HEK293 (cell line): ENCODE measurements at regions of chr6 and their contacts with region 1.

Region 1: DNA sequence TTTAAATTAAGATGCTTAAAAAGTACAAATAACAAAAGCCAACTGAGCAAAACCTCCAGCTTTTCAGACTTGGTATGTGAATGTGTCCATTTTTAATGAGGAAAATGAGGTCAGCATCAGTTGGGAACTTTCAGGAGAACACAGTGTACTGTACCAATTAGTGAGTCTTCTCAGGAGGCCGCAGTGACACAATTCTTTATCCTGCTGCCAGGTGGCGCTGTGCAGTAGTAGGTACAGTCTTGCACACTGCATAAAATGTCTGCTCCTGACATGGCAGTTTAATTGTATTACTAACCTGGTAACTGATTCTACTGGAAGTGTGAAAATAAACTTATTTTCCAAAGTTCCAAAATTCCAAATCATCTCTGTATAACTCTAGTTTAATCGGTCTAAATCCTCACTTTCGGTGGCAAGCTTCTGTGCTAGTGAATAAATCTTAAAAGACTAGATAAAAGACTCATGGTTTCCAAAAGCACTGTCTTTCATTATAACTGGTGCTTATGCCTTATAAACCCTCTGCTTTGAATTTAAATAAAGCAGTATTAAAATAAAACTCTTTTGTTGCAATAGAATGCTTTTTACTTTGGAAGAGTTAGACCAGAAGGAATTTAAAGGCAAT is 214.8 kb upstream of the MMS22L start:
- H3K4me3 ChIP-seq: no peak overlapping the region
- H3K27ac ChIP-seq: no peak overlapping the region
- H3K4me1 ChIP-seq: no peaks in the 10 kb centered on the region
- CTCF ChIP-seq: peak; percentile 27; the same call in 1 of the 2 replicates

Region 2: GRCh38 chr6:97110149-97110548 is 387.7 kb before region 1 on chr6:
- CTCF ChIA-PET with region 1: no interaction called
- POLR2A ChIA-PET with region 1: no interaction called
- H3K4me3 ChIP-seq: no peak overlapping the region
- H3K27ac ChIP-seq: no peak overlapping the region
- H3K4me1 ChIP-seq: no peaks in the 10 kb centered on the region
- CTCF ChIP-seq: no peak

Region 3: DNA sequence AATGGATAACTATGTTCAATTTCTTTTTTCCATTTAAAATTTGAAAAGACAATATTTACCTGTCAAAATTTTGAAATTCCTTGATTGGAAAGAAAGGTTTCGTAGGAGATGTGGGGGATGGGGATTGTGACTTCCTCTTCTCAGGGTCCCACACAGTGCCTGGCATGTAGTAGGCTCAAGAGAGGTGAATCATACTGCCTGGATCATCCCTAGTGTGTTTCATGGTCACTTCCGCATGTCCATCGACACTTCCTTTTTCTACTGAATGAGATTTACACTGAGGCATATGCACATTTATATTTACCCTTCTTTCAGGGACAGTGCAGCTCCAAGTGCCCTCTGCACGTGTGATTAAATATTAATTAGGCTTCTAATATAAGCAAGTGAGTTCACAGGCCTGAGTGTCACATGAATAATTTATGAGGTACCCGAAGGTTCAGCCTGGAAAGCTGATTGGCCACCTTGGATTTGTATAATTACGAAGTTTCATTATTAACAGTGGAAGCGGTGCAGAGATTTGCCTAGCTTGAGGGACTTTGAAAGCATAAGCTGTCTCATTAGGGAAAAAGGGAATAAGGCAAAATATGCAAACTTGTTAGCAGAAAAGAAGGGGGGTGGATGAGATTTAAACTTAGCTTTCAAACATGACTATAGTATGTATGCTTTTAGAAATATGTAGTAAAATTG is 37.3 kb before region 1 on chr6:
- CTCF ChIA-PET with region 1: no interaction called
- POLR2A ChIA-PET with region 1: no interaction called
- H3K4me3 ChIP-seq: no peak overlapping the region
- H3K27ac ChIP-seq: no peak overlapping the region
- H3K4me1 ChIP-seq: no peaks in the 10 kb centered on the region
- CTCF ChIP-seq: no peak

Region 4: DNA sequence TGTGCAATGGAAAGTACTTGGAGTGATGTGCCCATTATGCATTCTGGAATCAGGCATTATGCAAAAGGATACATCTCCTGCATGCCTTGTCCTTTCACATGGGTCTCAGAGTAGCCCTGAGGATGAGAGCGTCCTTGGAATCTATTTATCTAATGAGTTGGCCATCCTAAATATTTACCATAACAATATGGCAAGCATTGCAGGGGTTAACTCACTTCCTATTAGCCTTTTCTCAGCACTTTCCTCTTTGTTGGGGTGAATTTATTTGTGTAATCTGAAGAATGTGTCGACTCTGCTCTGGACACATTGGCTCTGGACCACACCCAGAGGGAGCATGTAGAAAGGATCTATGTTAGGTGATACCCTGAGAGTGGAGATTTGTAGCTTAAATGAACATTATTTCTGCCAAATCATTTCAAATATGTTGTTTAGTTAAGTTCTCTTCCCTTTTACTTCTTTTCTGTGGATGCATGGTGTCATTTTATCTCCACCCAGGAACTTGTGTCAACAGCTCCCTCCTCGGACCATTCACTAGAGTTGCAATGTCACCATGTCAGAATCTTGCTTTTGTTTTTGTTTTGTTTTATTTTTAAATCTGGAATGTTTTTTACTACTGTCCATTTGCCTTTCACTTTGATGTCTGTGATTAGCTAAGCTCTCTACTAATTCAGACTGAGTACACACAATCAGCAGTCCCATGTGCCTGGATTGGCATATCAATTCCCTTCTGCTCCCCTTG is 542.2 kb after region 1 on chr6:
- CTCF ChIA-PET with region 1: interaction called, 10 read pairs
- POLR2A ChIA-PET with region 1: no interaction called
- H3K4me3 ChIP-seq: no peak overlapping the region
- H3K27ac ChIP-seq: no peak overlapping the region
- H3K4me1 ChIP-seq: peaks cover 11% of the 10 kb centered on the region; the same call in 1 of the 2 replicates
- CTCF ChIP-seq: peak; percentile 28; the same call in 1 of the 2 replicates